ENCODE measurements at regions of chr1 and their contacts with region 1.

Region 1: GRCh38 chr1:74771913-74772515 is 39.1 kb downstream of the TYW3 start:
- DNase-seq: no peak
- H3K4me3 ChIP-seq: no peak overlapping the region
- H3K27ac ChIP-seq: no peak overlapping the region
- H3K4me1 ChIP-seq: no peaks in the 10 kb centered on the region
- H3K27me3 ChIP-seq: peaks cover 28% of the 10 kb centered on the region
- CTCF ChIP-seq: peak; percentile 49 to 68 (median 59)
- EP300 ChIP-seq: no peak
- POLR2A ChIP-seq: no peak

Region 2: GRCh38 chr1:75203415-75204277 is 431.6 kb after region 1 on chr1:
- in situ Hi-C with region 1: loop called (anchors 10 kb)
- intact Hi-C with region 1: loop called (anchors 5 kb)
- DNase-seq: no peak
- H3K4me3 ChIP-seq: no peak overlapping the region
- H3K27ac ChIP-seq: no peak overlapping the region
- H3K4me1 ChIP-seq: no peaks in the 10 kb centered on the region
- H3K27me3 ChIP-seq: no peaks in the 10 kb centered on the region
- CTCF ChIP-seq: peak; percentile 32 to 49 (median 44)
- EP300 ChIP-seq: no peak
- POLR2A ChIP-seq: no peak

Region 3: GRCh38 chr1:75208862-75209261 is 436.8 kb after region 1 on chr1:
- in situ Hi-C with region 1: loop called in 3 of 4 experiments (anchors 10 kb)
- intact Hi-C with region 1: loop called (anchors 5 kb)
- DNase-seq: no peak
- H3K4me3 ChIP-seq: no peak overlapping the region
- H3K27ac ChIP-seq: no peak overlapping the region
- H3K4me1 ChIP-seq: no peaks in the 10 kb centered on the region
- H3K27me3 ChIP-seq: no peaks in the 10 kb centered on the region
- CTCF ChIP-seq: no peak
- EP300 ChIP-seq: no peak
- POLR2A ChIP-seq: no peak